ENCODE measurements at regions of chr11 and their contacts with region 1.

Region 1: GRCh38 chr11:128157423-128158298 is 429.7 kb downstream of the ETS1 start:
- DNase-seq: peak; percentile 53
- CTCF ChIP-seq: peak; percentile 69

Region 2: DNA sequence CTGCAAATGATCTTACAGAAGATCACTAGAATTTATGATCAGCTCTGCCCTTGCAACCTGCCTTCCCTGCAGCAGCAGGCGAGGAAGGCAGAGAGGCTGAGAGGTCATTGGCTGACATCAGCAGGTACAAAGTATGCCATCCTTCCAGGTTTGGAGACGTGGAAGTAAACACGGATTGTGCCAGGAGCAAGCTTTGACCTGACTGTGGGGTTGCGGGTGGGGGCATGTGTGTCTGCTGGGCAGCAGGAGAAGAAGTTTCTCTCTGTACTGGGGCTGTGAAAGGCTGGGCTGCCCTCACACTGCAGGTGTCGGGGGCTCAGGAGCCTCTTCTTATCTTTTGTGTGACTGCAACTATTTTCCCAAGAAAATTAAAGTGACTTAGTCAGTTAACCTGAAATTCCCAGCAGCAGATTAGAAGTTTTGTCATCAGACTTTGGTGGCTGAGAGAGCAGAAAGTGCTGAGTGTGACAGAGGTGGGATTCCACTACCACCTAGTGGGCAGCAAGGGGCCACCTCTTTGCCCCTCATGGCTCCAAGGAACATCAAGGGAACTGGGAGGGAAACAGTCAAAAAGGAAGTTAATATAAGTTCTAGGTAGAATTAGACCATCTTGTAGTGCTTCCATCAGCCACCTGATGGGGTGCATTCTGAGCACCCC is 136.2 kb before region 1 on chr11:
- in situ Hi-C with region 1: loop called (anchors 10 kb)
- DNase-seq: no peak
- CTCF ChIP-seq: no peak

Region 3: GRCh38 chr11:128757235-128757711 is 599.6 kb after region 1 on chr11:
- in situ Hi-C with region 1: loop called (anchors 25 kb)
- DNase-seq: peak; percentile 83
- CTCF ChIP-seq: peak; percentile 84